H1 (cell line): ENCODE measurements at regions of chr10 and their contacts with region 1.

Region 1: GRCh38 chr10:100433253-100434240 is 29.3 kb upstream of the WNT8B start:
- DNase-seq: peak; percentile 95 to 99
- H3K4me3 ChIP-seq: no peak overlapping the region
- H3K27ac ChIP-seq: no peak overlapping the region
- H3K4me1 ChIP-seq: peaks cover 0 to 2% (median 0%) of the 10 kb centered on the region in 4 experiments; a peak in 1 of 7 replicates
- H3K27me3 ChIP-seq: no peaks in the 10 kb centered on the region
- CTCF ChIP-seq: peak; percentile 86 to 100 (median 99)
- EP300 ChIP-seq: no peak
- POLR2A ChIP-seq: no peak
- RAD21 ChIP-seq: peak; percentile 99 to 100

Region 2: DNA sequence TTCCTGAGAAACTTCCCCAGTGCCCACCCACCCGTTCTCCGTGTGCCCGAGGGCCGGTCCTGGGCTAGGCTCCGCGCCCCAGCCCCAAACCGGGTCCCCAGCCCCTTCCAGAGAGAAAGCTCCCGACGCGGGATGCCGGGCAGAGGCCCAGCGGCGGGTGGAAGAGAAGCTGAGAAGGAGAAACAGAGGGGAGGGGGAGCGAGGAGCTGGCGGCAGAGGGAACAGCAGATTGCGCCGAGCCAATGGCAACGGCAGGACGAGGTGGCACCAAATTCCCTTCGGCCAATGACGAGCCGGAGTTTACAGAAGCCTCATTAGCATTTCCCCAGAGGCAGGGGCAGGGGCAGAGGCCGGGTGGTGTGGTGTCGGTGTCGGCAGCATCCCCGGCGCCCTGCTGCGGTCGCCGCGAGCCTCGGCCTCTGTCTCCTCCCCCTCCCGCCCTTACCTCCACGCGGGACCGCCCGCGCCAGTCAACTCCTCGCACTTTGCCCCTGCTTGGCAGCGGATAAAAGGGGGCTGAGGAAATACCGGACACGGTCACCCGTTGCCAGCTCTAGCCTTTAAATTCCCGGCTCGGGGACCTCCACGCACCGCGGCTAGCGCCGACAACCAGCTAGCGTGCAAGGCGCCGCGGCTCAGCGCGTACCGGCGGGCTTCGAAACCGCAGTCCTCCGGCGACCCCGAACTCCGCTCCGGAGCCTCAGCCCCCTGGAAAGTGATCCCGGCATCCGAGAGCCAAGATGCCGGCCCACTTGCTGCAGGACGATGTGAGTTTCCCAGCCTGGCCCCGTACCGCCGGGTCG is 86.6 kb before region 1 on chr10 and contains the start of gene SCD:
- CTCF ChIA-PET with region 1: interaction called, 226 read pairs
- POLR2A ChIA-PET with region 1: interaction called, 6 read pairs
- DNase-seq: peak; percentile 86 to 91
- H3K4me3 ChIP-seq: peak within 1 kb of the TSS; percentile 85 to 95 (median 90)
- H3K27ac ChIP-seq: peak within 1 kb of the TSS; percentile 80
- H3K4me1 ChIP-seq: peaks cover 10 to 30% (median 20%) of the 10 kb centered on the region in 4 experiments
- H3K27me3 ChIP-seq: no peaks in the 10 kb centered on the region
- CTCF ChIP-seq: no peak
- EP300 ChIP-seq: peak in 1 of 2 experiments; percentile 32; a peak in 1 of 3 replicates
- POLR2A ChIP-seq: peak; percentile 25 to 82
- RAD21 ChIP-seq: no peak
- total RNA-seq, gene SCD: 604 and 621 TPM in 2 replicates

Region 3: DNA sequence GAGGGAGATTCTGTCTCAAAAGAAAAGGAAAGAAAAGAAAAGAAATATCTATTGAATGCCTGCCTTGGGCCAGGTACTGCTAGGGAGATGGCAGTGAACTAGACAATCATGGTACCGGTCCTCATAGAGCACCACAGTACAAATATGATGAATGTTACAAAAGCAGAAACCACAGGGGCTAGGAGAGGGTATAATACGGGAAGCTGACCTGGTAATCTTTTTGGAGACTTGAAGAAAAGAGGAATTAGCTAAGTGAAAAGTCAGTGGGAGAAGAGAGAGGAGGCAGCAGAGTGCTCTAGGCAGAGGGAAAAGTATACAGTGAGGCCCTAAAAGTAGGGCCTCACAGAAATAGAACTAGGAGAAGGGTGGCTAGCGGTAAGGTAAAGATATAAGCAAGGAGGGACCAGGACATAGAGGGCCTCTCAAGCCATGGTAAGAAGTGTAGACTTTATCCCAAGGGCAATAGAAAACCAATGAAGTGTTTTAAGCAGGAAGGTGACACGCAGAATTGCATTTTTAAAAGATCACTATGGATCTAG is 13.6 kb before region 1 on chr10:
- CTCF ChIA-PET with region 1: interaction called, 34 read pairs
- POLR2A ChIA-PET with region 1: no interaction called
- DNase-seq: no peak
- H3K4me3 ChIP-seq: no peak overlapping the region
- H3K27ac ChIP-seq: no peak overlapping the region
- H3K4me1 ChIP-seq: no peaks in the 10 kb centered on the region
- H3K27me3 ChIP-seq: no peaks in the 10 kb centered on the region; a peak in 1 of 7 replicates
- CTCF ChIP-seq: no peak
- EP300 ChIP-seq: no peak
- POLR2A ChIP-seq: no peak
- RAD21 ChIP-seq: no peak

Region 4: GRCh38 chr10:100470367-100470766 is 36.8 kb after region 1 on chr10:
- CTCF ChIA-PET with region 1: interaction called, 30 read pairs
- POLR2A ChIA-PET with region 1: no interaction called
- DNase-seq: no peak
- H3K4me3 ChIP-seq: no peak overlapping the region
- H3K27ac ChIP-seq: no peak overlapping the region
- H3K4me1 ChIP-seq: no peaks in the 10 kb centered on the region
- H3K27me3 ChIP-seq: no peaks in the 10 kb centered on the region; a peak in 4 of 7 replicates
- CTCF ChIP-seq: no peak
- EP300 ChIP-seq: no peak
- POLR2A ChIP-seq: no peak
- RAD21 ChIP-seq: no peak

Region 5: GRCh38 chr10:100496567-100496966 is 63.0 kb after region 1 on chr10:
- CTCF ChIA-PET with region 1: interaction called, 18 read pairs
- POLR2A ChIA-PET with region 1: no interaction called
- DNase-seq: no peak
- H3K4me3 ChIP-seq: no peak overlapping the region
- H3K27ac ChIP-seq: no peak overlapping the region
- H3K4me1 ChIP-seq: no peaks in the 10 kb centered on the region
- H3K27me3 ChIP-seq: peaks cover 7 to 50% (median 21%) of the 10 kb centered on the region in 4 experiments
- CTCF ChIP-seq: no peak
- EP300 ChIP-seq: no peak
- POLR2A ChIP-seq: no peak
- RAD21 ChIP-seq: no peak

Region 6: GRCh38 chr10:100508691-100509150 is 75.2 kb after region 1 on chr10:
- CTCF ChIA-PET with region 1: interaction called, 190 read pairs
- POLR2A ChIA-PET with region 1: interaction called, 4 read pairs
- DNase-seq: no peak
- H3K4me3 ChIP-seq: no peak overlapping the region
- H3K27ac ChIP-seq: no peak overlapping the region
- H3K4me1 ChIP-seq: no peaks in the 10 kb centered on the region; a peak in 1 of 7 replicates
- H3K27me3 ChIP-seq: peaks cover 0 to 11% (median 4%) of the 10 kb centered on the region in 4 experiments; a peak in 3 of 7 replicates
- CTCF ChIP-seq: peak in 2 of 3 experiments; percentile 81 to 88; a peak in 3 of 4 replicates
- EP300 ChIP-seq: no peak
- POLR2A ChIP-seq: no peak
- RAD21 ChIP-seq: peak; percentile 95 to 98

Region 7: DNA sequence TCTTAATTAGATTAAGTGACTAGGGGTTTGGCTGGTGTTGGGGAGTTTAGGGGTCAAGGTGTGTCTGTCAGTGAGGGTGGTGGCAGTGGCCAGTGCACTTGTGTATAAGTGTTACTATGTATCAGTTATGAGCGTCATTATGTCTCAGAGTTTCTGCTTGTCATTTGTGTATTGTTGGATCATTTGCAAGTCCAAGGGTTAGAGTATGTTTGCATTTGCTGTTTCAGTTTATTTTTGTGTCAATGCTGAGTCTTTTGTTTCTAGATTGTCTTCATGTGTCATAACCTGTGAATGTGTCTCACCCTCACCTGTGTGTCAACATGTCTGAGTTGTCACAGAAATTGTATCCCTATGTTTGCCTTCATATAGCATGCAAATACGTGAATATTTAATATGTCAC is 214.4 kb after region 1 on chr10:
- CTCF ChIA-PET with region 1: no interaction called
- POLR2A ChIA-PET with region 1: no interaction called
- DNase-seq: no peak
- H3K4me3 ChIP-seq: no peak overlapping the region
- H3K27ac ChIP-seq: no peak overlapping the region
- H3K4me1 ChIP-seq: peaks cover 3 to 20% (median 12%) of the 10 kb centered on the region in 4 experiments
- H3K27me3 ChIP-seq: peaks cover 4 to 17% (median 12%) of the 10 kb centered on the region in 4 experiments
- CTCF ChIP-seq: no peak
- EP300 ChIP-seq: no peak
- POLR2A ChIP-seq: no peak
- RAD21 ChIP-seq: no peak